Activated CD4-positive, alpha-beta memory T cell treated with anti-CD3 and anti-CD28 coated beads, Interleukin-2, amount 10 ng/mL, durations not matched to agents 7 days and 5 days (primary cell): ENCODE measurements at regions of chr12 and their contacts with region 1.

Region 1: GRCh38 chr12:642633-643474 is 20.4 kb downstream of the NINJ2 start:
- DNase-seq: peak; percentile 87
- H3K4me3 Mint-ChIP-seq: peak overlapping the region; percentile 84
- H3K27ac Mint-ChIP-seq: peak overlapping the region; percentile 94
- H3K4me1 Mint-ChIP-seq: peaks cover 64% of the 10 kb centered on the region
- H3K27me3 Mint-ChIP-seq: no peaks in the 10 kb centered on the region

Region 2: GRCh38 chr12:607526-608001 is 35.3 kb before region 1 on chr12:
- CTCF ChIA-PET with region 1: interaction called, 4 read pairs
- POLR2A ChIA-PET with region 1: interaction called, 15 read pairs
- DNase-seq: peak; percentile 38
- H3K4me3 Mint-ChIP-seq: no peak overlapping the region
- H3K27ac Mint-ChIP-seq: peak overlapping the region; percentile 80
- H3K4me1 Mint-ChIP-seq: peaks cover 51% of the 10 kb centered on the region
- H3K27me3 Mint-ChIP-seq: no peaks in the 10 kb centered on the region

Region 3: GRCh38 chr12:622416-622815 is 20.4 kb before region 1 on chr12:
- CTCF ChIA-PET with region 1: interaction called, 3 read pairs
- POLR2A ChIA-PET with region 1: interaction called, 17 read pairs
- DNase-seq: no peak
- H3K4me3 Mint-ChIP-seq: no peak overlapping the region
- H3K27ac Mint-ChIP-seq: peak overlapping the region; percentile 78
- H3K4me1 Mint-ChIP-seq: peaks cover 51% of the 10 kb centered on the region
- H3K27me3 Mint-ChIP-seq: no peaks in the 10 kb centered on the region

Region 4: DNA sequence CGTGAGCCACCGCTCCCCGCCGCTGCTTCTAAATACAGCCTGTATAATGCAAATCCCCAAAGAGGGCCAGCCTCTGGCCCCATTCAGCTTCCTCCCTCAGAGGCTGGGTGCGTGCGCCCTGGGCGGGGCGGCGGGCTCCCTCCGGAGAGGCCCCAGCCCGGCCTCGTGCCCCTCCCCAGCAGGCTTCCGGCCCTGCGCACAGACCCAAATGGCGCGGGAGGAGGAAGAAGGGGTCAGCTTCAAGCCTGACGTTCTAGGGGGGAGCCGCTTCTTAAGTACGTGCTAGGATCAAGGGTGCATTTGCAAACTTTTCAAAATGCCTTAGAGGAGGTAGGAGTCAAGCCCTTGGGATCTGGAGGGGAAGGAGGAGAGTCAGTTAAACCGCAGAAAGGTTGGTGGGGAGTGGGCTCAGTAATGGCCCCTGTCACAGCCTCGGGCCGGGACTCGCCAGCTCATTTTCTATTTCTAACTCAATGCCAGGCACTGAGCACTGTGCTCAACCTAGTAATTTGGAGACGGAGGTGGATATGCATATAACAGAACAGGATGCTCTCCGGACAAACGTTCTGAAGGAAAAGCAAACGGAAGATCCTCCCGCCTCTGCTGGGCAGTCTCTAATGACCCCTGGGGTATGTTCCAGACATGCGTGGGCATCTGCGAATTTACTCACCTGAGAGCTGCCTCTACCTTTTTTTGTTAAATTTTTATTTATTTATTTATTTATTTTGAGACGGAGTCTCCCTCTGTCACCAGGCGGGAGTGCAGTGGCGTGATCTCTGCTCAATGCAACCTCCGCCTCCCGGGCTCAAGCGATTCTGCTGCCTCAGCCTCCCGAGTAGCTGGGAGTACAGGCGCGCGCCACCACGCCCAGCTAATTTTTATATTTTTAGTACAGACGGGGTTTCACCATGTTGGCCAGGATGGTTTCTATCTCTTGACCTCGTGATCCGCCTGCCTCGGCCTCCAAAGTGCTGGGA is 11.9 kb before region 1 on chr12:
- CTCF ChIA-PET with region 1: interaction called, 4 read pairs
- POLR2A ChIA-PET with region 1: interaction called, 24 read pairs
- DNase-seq: no peak
- H3K4me3 Mint-ChIP-seq: no peak overlapping the region
- H3K27ac Mint-ChIP-seq: no peak overlapping the region
- H3K4me1 Mint-ChIP-seq: peaks cover 17% of the 10 kb centered on the region
- H3K27me3 Mint-ChIP-seq: no peaks in the 10 kb centered on the region